ENCODE measurements at regions of chr15 and their contacts with region 1.

Region 1: GRCh38 chr15:57427367-57427821 is 51.1 kb downstream of the CGNL1 start:
- DNase-seq: peak; percentile 31
- ATAC-seq: peak; percentile 87
- H3K4me3 ChIP-seq: peak overlapping the region in 2 of 3 experiments; percentile 30; a peak in 4 of 6 replicates
- H3K27ac ChIP-seq: peak overlapping the region; percentile 17
- H3K4me1 ChIP-seq: peaks cover 36% of the 10 kb centered on the region
- H3K27me3 ChIP-seq: no peaks in the 10 kb centered on the region
- CTCF ChIP-seq: no peak
- EP300 ChIP-seq: no peak
- POLR2A ChIP-seq: no peak
- RAD21 ChIP-seq: no peak

Region 2: DNA sequence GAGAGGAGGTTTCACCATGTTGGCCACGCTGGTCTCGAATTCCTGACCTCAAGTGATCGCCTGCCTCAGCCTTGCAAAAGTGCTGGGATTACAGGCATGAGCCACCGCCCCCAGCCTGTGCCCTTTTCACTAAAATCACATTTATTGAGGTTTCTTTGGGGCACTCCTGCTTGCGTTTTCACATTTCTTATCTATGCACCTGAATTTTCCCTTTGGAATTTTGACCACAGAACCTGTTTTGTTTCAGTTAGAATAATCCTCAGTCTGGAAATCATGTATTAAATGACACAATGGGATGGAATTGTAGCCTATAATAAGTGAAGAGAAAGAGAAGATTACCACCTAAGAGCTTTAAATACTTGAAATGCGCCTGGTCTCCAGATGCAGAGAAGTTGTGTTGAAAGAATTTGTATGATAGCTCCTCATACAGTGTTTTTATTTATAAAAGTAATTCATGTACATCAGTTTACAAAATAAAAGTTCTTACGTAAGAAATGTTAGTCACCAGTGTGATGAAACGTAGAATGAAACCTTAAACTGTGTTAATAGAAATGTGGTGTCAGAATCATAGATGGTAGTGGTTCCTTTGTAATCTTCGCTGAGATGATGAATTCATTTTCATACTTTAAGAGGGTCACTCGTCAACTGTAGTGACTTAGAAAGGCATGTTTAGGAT is 402.0 kb before region 1 on chr15:
- CTCF ChIA-PET with region 1: no interaction called
- POLR2A ChIA-PET with region 1: no interaction called
- in situ Hi-C with region 1: no loop called
- intact Hi-C with region 1: no loop called
- DNase-seq: no peak
- ATAC-seq: no peak
- H3K4me3 ChIP-seq: no peak overlapping the region
- H3K27ac ChIP-seq: no peak overlapping the region
- H3K4me1 ChIP-seq: peaks cover 13% of the 10 kb centered on the region
- H3K27me3 ChIP-seq: no peaks in the 10 kb centered on the region
- CTCF ChIP-seq: no peak
- EP300 ChIP-seq: no peak
- POLR2A ChIP-seq: no peak
- RAD21 ChIP-seq: no peak

Region 3: DNA sequence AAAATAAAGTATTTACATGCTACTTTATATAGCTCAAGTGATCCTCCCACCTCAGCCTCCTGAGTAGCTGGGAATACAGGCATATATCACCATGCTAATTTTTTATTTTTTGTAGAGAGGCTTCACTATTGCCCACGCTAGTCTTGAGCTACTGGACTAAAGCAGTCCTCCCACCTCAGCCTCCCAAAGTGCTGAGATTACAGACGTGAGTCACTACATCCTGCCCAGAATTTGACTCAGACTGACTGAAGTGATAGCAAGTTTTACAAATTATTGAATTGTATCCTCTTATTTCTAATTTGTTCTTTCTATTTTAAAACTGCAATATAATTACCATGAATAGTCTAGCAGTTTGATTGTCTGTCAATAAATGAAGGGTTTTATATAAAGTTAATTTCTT is 261.4 kb before region 1 on chr15:
- CTCF ChIA-PET with region 1: no interaction called
- POLR2A ChIA-PET with region 1: no interaction called
- in situ Hi-C with region 1: no loop called
- intact Hi-C with region 1: no loop called
- DNase-seq: no peak
- ATAC-seq: no peak
- H3K4me3 ChIP-seq: no peak overlapping the region
- H3K27ac ChIP-seq: no peak overlapping the region
- H3K4me1 ChIP-seq: peaks cover 15% of the 10 kb centered on the region
- H3K27me3 ChIP-seq: no peaks in the 10 kb centered on the region
- CTCF ChIP-seq: no peak
- EP300 ChIP-seq: no peak
- POLR2A ChIP-seq: no peak
- RAD21 ChIP-seq: no peak

Region 4: GRCh38 chr15:57375827-57376695 is 51.3 kb before region 1 on chr15 and contains the start of gene CGNL1:
- CTCF ChIA-PET with region 1: no interaction called
- POLR2A ChIA-PET with region 1: interaction called, 5 read pairs
- in situ Hi-C with region 1: no loop called
- intact Hi-C with region 1: loop called (anchors 10 kb)
- DNase-seq: peak; percentile 14
- ATAC-seq: peak; percentile 89
- H3K4me3 ChIP-seq: peak within 1 kb of the TSS; percentile 67 to 85 (median 76)
- H3K27ac ChIP-seq: peak within 1 kb of the TSS; percentile 55
- H3K4me1 ChIP-seq: peaks cover 53% of the 10 kb centered on the region
- H3K27me3 ChIP-seq: peaks cover 3 to 12% of the 10 kb centered on the region in 2 experiments; a peak in 2 of 5 replicates
- CTCF ChIP-seq: no peak
- EP300 ChIP-seq: no peak
- POLR2A ChIP-seq: peak in 1 of 2 experiments; percentile 50; a peak in 2 of 4 replicates
- RAD21 ChIP-seq: no peak
- total RNA-seq, gene CGNL1: 15.6 and 16.2 TPM in 2 replicates

Region 5: DNA sequence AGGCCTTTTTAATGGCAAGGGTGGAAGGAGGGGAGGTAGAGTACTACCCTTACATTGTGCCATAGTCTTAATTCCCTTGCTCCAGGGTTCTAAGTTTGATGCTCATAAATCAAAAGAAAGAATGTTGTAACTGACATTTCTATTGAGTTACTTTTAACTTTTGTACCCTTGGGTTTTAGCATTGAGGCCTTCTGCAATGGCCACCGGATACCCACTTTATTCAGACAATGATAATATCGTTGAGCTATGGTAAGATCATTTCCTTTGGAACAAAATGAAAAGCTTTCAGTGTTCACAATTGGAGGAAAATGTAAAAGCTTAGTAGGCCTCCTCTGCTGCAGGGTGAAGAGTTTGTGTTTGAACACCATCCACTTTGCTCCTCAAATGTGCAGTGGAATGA is 34.3 kb before region 1 on chr15:
- CTCF ChIA-PET with region 1: no interaction called
- POLR2A ChIA-PET with region 1: no interaction called
- in situ Hi-C with region 1: no loop called
- intact Hi-C with region 1: loop called (anchors 5 kb)
- DNase-seq: no peak
- ATAC-seq: no peak
- H3K4me3 ChIP-seq: no peak overlapping the region
- H3K27ac ChIP-seq: no peak overlapping the region
- H3K4me1 ChIP-seq: peaks cover 33% of the 10 kb centered on the region
- H3K27me3 ChIP-seq: no peaks in the 10 kb centered on the region
- CTCF ChIP-seq: no peak
- EP300 ChIP-seq: no peak
- POLR2A ChIP-seq: no peak
- RAD21 ChIP-seq: no peak

Measured in HepG2 (cell line).